GM13976 (cell line): ENCODE measurements at regions of chr3 and their contacts with region 1.

Region 1: GRCh38 chr3:175495331-175495730 is 636.2 kb downstream of the NAALADL2 start:
- DNase-seq: peak; percentile 15
- CTCF ChIP-seq: no peak

Region 2: DNA sequence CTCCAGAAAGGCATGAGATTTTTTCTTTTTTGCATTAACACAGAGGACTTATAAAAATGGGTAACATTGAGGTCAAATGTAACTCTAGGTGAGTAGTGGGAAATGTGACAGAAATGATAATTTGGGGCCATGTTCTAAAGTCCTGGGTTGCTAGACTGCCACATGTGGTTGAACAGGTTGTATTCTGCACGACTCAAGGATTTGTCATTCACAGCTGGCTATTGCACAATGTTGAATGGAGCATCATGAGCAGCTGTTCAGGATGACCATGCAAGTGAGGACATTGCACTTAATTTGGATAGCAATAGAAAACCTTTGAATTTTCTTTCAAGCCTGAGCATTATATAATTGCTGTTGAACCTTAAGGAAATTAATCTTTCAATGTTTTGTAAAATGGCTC is 239.6 kb before region 1 on chr3:
- in situ Hi-C with region 1: loop called (anchors 25 kb)
- DNase-seq: no peak
- CTCF ChIP-seq: no peak